Dendritic cell treated with granulocyte-macrophage colony-stimulating factor and Interleukin-4, amounts not matched to agents 40 ng/mL and 50 ng/mL, for 4 days (primary cell): ENCODE measurements at regions of chr3 and their contacts with region 1.

Region 1: GRCh38 chr3:178385280-178385952 is 150.8 kb upstream of the KCNMB2 start:
- H3K4me3 Mint-ChIP-seq: no peak overlapping the region
- H3K27ac Mint-ChIP-seq: no peak overlapping the region
- H3K4me1 Mint-ChIP-seq: no peaks in the 10 kb centered on the region
- H3K27me3 Mint-ChIP-seq: no peaks in the 10 kb centered on the region

Region 2: GRCh38 chr3:177050501-177051237 is 1334.7 kb before region 1 on chr3:
- intact Hi-C with region 1: loop called (anchors 5 kb)
- H3K4me3 Mint-ChIP-seq: no peak overlapping the region
- H3K27ac Mint-ChIP-seq: no peak overlapping the region
- H3K4me1 Mint-ChIP-seq: peaks cover 6% of the 10 kb centered on the region
- H3K27me3 Mint-ChIP-seq: no peaks in the 10 kb centered on the region